PC-9 (cell line): ENCODE measurements at regions of chr12 and their contacts with region 1.

Region 1: GRCh38 chr12:119659289-119659897 is 8.5 kb upstream of the PRKAB1 start:
- DNase-seq: peak in 1 of 2 experiments; percentile 17
- H3K4me3 ChIP-seq: no peak overlapping the region
- H3K27ac ChIP-seq: no peak overlapping the region
- H3K4me1 ChIP-seq: no peaks in the 10 kb centered on the region
- H3K27me3 ChIP-seq: peaks cover 4% of the 10 kb centered on the region; the same call in 1 of the 2 replicates
- CTCF ChIP-seq: peak; percentile 89

Region 2: GRCh38 chr12:119169147-119169546 is 490.2 kb before region 1 on chr12:
- CTCF ChIA-PET with region 1: no interaction called
- POLR2A ChIA-PET with region 1: no interaction called
- intact Hi-C with region 1: loop called (anchors 5 kb)
- DNase-seq: peak; percentile 37 to 50
- H3K4me3 ChIP-seq: no peak overlapping the region
- H3K27ac ChIP-seq: no peak overlapping the region
- H3K4me1 ChIP-seq: peaks cover 25% of the 10 kb centered on the region
- H3K27me3 ChIP-seq: no peaks in the 10 kb centered on the region
- CTCF ChIP-seq: no peak

Region 3: DNA sequence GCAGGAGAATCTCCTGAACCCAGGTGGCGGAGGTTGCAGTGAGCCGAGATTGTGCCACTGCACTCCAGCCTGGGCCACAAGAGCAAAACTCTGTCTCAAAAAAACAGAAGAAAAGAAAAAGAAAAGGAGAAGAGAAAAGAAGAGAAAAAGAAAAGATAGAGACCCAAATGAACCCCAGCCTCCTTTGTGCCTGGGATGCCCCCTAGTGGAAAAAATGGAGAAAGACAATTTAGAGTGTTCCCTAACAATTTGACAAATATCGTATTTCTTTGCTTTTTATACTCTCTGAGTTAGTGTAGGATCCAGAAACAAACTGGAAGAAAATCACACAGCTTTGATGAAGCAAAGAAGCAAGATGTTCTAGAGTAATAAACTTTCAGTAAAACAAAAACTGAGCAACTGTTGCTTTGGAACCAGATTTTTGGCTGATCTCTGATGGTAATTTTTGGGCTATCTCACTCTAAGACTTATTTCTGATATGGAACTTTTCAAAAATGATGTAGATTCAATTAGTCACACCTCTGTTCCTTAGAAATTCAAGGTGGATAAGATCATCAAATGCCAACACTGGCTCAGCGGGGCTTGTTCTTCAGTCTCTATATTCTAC is 10.1 kb before region 1 on chr12:
- CTCF ChIA-PET with region 1: no interaction called
- POLR2A ChIA-PET with region 1: no interaction called
- intact Hi-C with region 1: no loop called
- DNase-seq: no peak
- H3K4me3 ChIP-seq: no peak overlapping the region
- H3K27ac ChIP-seq: no peak overlapping the region
- H3K4me1 ChIP-seq: no peaks in the 10 kb centered on the region
- H3K27me3 ChIP-seq: peaks cover 29% of the 10 kb centered on the region
- CTCF ChIP-seq: peak; percentile 86

Region 4: DNA sequence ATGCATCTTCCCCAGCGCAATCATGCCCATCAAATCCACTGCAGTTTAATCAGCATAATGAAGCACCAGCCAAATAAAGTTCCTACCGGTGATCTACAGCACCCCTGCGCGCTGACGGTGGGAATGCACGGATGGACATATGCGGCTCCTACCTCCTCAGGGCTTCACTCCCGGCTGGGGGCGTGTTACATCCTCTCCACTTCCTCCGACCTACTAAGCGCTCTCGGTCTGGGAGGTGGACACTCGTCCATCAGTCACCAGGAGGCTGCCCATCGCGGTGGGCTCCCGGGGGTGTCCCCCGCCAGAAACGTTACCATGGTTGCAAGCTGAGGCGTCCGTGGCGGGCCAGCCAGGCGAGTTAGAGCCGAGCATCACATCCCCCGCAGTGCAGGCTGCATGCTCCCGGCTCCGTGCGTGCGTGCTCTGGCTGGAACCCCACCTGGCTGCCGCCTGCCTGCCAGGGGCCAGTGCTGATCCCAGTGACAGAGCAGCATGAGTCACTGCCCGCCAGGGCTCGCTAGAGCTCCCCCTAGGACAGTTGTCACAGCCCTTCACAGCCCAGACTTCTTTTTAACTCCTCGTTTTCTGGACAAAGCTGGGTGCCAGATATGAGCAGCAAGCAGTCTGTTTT is 144.7 kb after region 1 on chr12:
- CTCF ChIA-PET with region 1: no interaction called
- POLR2A ChIA-PET with region 1: no interaction called
- intact Hi-C with region 1: no loop called
- DNase-seq: peak in 1 of 2 experiments; percentile 47
- H3K4me3 ChIP-seq: no peak overlapping the region
- H3K27ac ChIP-seq: no peak overlapping the region
- H3K4me1 ChIP-seq: no peaks in the 10 kb centered on the region
- H3K27me3 ChIP-seq: no peaks in the 10 kb centered on the region
- CTCF ChIP-seq: peak; percentile 39; the same call in 1 of the 2 replicates